ENCODE measurements at regions of chr6 and their contacts with region 1.

Region 1: DNA sequence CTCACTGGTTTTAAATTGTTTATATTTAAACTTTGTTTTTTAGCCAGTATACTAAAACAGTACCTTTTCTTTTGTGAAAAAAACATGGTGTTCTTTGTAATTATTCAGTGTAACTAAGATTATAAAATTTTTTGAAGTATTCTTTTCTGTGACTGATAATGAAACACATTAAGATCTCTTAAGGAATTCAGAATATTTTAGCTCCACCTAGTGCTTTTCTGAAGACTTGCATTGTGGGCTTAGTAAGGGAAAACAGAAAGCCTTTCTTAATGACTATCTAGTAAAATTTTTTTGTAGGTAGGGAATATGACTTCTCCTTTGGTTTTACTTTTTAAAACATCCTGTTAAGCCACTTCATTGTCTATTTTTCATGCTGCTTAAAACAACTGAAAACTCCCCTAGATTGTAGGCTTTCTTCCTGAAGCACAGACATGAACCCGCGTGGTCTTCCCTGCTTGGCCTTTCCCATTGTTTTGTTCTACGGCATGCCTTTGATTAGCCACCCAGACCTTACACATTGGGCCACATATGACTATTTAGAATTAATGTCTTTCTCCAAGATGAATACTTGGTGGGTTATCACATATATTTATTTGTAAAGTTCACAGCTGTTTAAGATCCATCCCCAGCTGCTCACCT is 72.1 kb downstream of the AFDN start:
- DNase-seq: peak in 1 of 2 experiments; percentile 65
- H3K4me3 ChIP-seq: no peak overlapping the region
- H3K4me1 ChIP-seq: peaks cover 3% of the 10 kb centered on the region; the same call in 1 of the 2 replicates
- H3K27me3 ChIP-seq: no peaks in the 10 kb centered on the region

Region 2: GRCh38 chr6:167350731-167351655 is 547.8 kb before region 1 on chr6:
- in situ Hi-C with region 1: loop called (anchors 25 kb)
- DNase-seq: peak; percentile 61 to 91
- H3K4me3 ChIP-seq: peak overlapping the region; percentile 26
- H3K4me1 ChIP-seq: peaks cover 6% of the 10 kb centered on the region; the same call in 1 of the 2 replicates
- H3K27me3 ChIP-seq: no peaks in the 10 kb centered on the region

Region 3: DNA sequence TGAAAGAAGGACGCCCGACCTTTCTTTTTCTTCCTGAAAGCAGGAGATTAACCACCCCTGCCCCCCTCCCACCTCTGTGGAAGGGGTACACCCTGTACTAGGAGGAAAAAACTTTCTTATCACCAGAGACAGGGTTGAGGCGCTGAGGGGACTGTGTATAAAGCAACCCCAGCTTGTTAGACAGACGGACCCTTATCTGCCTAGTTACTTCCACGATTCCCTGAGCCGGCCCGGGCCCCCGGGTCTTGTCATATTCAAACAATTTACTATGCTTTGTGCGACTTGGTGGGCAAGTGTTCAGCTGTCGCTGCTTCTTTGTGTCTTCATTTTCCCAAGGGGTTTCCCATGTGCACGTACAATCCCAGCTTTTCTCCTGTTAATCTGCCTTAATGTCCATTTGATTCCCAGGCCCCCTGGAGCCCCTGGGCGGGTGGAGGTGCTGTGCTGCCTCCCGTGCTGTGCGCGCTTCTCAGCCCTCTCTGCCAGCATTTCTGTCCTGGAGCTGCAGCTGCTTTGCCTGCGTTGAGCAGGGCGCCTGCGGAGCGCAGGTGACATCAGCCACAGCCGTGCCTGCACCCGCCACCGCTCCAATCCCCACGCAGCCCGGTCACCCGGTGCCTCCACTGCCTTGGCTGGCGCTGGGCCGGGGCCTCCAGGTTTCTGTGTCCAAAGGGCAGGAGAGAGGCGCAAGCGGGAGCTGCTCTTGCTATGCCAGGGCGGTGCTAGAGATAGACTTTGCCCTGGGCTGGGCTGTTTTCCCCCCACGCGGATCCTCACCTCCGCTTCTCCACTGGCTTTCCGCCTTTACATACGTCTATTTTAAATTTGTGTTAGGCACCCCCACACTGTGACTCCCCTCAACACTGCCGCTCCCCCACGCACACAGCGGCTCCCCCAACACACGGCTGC is 477.7 kb before region 1 on chr6:
- in situ Hi-C with region 1: no loop called
- DNase-seq: no peak
- H3K4me3 ChIP-seq: no peak overlapping the region
- H3K4me1 ChIP-seq: peaks cover 5% of the 10 kb centered on the region
- H3K27me3 ChIP-seq: no peaks in the 10 kb centered on the region

Region 4: DNA sequence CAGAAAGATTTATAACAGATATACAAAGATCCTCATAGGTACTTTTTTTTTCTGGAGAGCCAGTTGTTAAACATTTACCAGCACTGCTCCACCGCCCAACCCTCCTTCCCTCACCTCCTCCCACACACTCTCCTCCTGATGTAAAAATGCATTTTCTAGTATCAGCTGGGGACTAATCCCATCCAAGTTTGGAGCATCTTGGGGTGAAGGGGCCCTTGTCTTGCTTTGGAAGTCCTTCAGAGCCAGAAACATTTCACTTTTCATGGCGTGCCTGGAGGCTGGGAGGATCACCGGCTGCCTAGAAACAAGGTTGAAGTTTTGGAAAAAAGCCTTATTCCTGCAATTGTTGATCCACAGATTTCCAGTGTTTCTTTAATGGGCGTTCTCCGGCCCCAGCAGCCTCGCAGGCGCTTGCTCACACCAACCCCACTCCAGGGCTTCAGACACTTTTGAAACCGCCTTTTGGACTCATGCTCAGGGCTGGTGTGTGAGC is 237.2 kb before region 1 on chr6:
- in situ Hi-C with region 1: no loop called
- DNase-seq: no peak
- H3K4me3 ChIP-seq: no peak overlapping the region
- H3K4me1 ChIP-seq: peaks cover 4% of the 10 kb centered on the region; the same call in 1 of the 2 replicates
- H3K27me3 ChIP-seq: no peaks in the 10 kb centered on the region

Measured in HAP-1 (cell line).